ENCODE measurements at regions of chr4 and their contacts with region 1.

Region 1: GRCh38 chr4:8403173-8403753 is 37.3 kb downstream of the ACOX3 start:
- DNase-seq: peak; percentile 93
- H3K4me3 ChIP-seq: no peak overlapping the region
- H3K27ac ChIP-seq: peak overlapping the region; percentile 75 to 90 (median 80)
- H3K4me1 ChIP-seq: peaks cover 0 to 27% (median 23%) of the 10 kb centered on the region in 4 donors
- H3K27me3 ChIP-seq: no peaks in the 10 kb centered on the region
- CTCF ChIP-seq: peak; percentile 83 to 97 (median 88)
- EP300 ChIP-seq: no peak
- POLR2A ChIP-seq: no peak

Region 2: DNA sequence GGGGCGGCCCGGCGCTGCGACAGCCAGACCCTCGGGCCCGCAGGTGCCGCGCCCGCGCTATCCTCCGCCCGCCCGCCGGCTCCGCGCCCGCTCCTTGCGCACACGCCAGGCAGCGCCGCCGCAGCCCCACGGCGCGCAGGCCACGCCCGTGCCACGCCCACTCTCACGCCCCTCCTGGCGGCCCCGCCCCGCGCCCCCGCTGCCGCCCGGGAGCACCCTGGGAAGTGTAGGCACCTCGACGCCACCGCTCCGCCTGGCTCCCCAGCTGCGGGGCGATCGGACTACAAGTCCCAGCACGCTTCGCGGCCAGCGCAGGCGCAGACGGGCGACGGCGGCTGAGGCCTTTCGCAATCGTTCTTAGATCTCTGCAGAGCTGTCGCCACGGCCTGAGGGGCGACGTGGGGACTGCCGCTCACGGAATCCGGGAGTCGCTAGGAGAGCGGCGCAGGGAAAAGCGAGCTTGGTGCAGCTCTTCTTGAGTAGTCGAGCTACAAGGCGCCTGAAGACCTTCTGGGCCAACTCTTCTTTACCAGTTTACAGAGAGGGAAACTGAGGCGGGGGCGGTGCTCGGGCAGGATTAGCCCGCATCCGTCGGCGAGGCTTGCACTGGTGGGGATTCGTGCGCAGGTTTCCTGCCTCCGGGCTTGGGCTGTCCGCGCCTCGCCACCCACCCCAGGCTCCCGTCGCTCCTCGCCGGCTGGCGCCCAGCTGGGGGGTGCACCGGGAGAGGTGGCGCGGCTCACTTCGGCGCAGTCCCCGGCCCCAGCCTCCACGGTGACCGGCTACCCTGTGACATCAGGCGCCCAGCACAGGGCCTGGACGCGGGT is 244.3 kb before region 1 on chr4 and contains the start of gene ABLIM2:
- intact Hi-C with region 1: loop called (anchors 10 kb)
- DNase-seq: peak; percentile 99
- H3K4me3 ChIP-seq: peak within 1 kb of the TSS; percentile 68 to 98 (median 84)
- H3K27ac ChIP-seq: peak within 1 kb of the TSS; percentile 66 to 81 (median 76)
- H3K4me1 ChIP-seq: peaks cover 0 to 25% (median 23%) of the 10 kb centered on the region in 4 donors
- H3K27me3 ChIP-seq: peaks cover 7 to 12% (median 11%) of the 10 kb centered on the region in 3 donors
- CTCF ChIP-seq: no peak
- EP300 ChIP-seq: no peak
- POLR2A ChIP-seq: peak; percentile 52 to 55
- total RNA-seq, gene ABLIM2: 3.1 to 8.9 (median 5.6) TPM

Region 3: DNA sequence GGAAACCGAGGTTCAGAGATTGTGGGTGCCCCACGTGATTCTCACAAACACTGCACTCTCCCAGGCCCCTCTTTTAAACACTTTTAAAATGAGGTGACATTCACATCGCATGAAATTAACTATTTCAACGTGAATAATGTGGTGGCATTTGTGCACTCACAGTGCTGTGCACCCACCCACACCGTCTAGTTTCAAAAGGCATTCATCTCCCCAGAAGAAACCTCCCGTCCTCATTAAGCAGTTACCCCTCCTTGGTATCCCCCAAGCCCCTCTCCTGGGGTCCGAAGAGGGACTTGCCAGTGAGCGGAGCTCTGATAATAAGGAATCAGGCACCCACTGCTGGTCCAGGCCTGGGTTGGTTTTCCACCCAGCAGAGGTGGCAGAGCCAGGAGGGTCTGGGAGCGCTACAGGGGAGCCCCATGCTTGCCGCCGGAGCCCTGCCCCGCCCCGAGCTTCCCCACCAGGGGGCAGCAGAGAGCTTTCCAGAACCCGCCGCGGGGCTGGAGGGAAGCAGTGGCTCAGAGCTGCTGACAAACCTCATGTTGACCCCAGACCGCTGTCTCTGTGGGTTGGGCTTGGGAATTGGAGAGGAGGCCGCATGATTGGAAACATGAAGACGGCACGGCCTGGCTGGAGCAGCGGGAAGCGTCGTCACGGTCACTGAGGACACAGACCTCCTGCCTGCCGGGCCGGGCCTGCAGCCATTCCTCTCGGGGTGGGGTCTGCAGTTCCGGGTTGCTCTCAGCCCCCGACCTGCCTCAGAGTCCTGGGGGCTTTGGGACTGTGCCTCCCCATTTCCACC is 161.2 kb before region 1 on chr4:
- intact Hi-C with region 1: loop called (anchors 1 kb)
- DNase-seq: peak; percentile 96
- H3K4me3 ChIP-seq: no peak overlapping the region
- H3K27ac ChIP-seq: peak overlapping the region in 3 of 4 donors; percentile 2 to 49 (median 43)
- H3K4me1 ChIP-seq: peaks cover 0 to 12% (median 11%) of the 10 kb centered on the region in 4 donors
- H3K27me3 ChIP-seq: no peaks in the 10 kb centered on the region
- CTCF ChIP-seq: peak; percentile 90 to 99 (median 92)
- EP300 ChIP-seq: no peak
- POLR2A ChIP-seq: no peak

Region 4: GRCh38 chr4:8267077-8267476 is 136.2 kb before region 1 on chr4:
- intact Hi-C with region 1: loop called (anchors 2 kb)
- DNase-seq: peak; percentile 90
- H3K4me3 ChIP-seq: no peak overlapping the region
- H3K27ac ChIP-seq: peak overlapping the region; percentile 45 to 89 (median 50)
- H3K4me1 ChIP-seq: peaks cover 0 to 48% (median 45%) of the 10 kb centered on the region in 4 donors
- H3K27me3 ChIP-seq: no peaks in the 10 kb centered on the region
- CTCF ChIP-seq: peak; percentile 31 to 82 (median 57)
- EP300 ChIP-seq: peak in 1 of 4 donors; percentile 55
- POLR2A ChIP-seq: no peak

Region 5: GRCh38 chr4:8274765-8275547 is 128.3 kb before region 1 on chr4:
- intact Hi-C with region 1: loop called (anchors 2 kb)
- DNase-seq: peak; percentile 98
- H3K4me3 ChIP-seq: no peak overlapping the region
- H3K27ac ChIP-seq: peak overlapping the region; percentile 63 to 89 (median 84)
- H3K4me1 ChIP-seq: peaks cover 0 to 98% (median 92%) of the 10 kb centered on the region in 4 donors
- H3K27me3 ChIP-seq: no peaks in the 10 kb centered on the region
- CTCF ChIP-seq: peak in 3 of 4 experiments; percentile 23 to 51 (median 50)
- EP300 ChIP-seq: peak in 2 of 4 donors; percentile 76
- POLR2A ChIP-seq: no peak

Region 6: DNA sequence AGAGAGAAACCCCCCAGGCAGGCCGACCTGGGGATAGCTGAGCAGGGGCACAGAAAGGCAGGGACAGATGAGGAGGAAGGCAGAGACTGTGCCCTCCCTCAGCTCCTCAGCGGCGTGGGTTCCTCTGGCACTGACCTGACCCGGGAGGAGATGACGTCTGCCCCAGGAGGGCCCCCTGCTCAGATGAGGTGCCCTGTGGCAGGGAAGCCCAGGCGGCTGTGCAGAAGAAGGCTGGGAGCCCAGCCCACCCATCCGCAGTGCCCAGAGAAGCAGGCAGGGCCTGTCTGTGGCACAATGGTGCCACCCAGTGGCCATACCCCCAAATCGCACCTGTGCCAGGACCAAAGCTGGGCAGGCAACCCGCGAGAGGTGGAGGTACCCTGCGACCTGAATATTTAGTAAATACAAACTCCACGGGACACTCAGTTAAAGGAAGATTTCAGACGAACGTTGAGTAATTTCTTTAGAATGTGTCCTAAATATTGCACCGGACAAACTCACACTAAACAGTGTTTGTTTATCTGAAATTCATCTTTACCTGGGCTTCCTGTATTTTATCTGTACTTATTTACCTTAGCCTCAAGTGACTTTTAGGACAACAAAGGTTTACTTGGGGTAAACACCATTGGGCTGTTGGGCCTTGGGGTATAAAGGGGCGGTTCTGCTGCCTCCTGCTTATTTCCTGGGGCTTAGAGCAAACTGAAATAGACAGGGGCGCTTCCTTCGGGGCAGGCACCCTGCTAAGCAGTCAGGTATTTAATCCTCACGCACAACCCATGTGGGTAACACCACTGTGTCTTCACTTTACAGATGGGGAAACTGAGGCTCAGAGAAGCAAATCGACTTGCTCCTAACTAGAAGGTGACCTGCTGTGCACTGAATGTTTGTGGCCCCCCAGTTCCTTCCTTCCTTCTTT is 514.9 kb after region 1 on chr4:
- intact Hi-C with region 1: no loop called
- DNase-seq: peak; percentile 65
- H3K4me3 ChIP-seq: no peak overlapping the region
- H3K27ac ChIP-seq: no peak overlapping the region
- H3K4me1 ChIP-seq: no peaks in the 10 kb centered on the region
- H3K27me3 ChIP-seq: peaks cover 0 to 45% (median 8%) of the 10 kb centered on the region in 3 donors
- CTCF ChIP-seq: peak; percentile 28 to 76 (median 52)
- EP300 ChIP-seq: no peak
- POLR2A ChIP-seq: no peak